K562 (cell line): ENCODE measurements at regions of chr1 and their contacts with region 1.

Region 1: GRCh38 chr1:202998836-202999750 is 8.1 kb upstream of the TMEM183A start:
- DNase-seq: peak; percentile 32 to 86 (median 44)
- ATAC-seq: peak; percentile 77
- H3K4me3 ChIP-seq: no peak overlapping the region
- H3K27ac ChIP-seq: no peak overlapping the region
- H3K4me1 ChIP-seq: peaks cover 6 to 7% of the 10 kb centered on the region in 2 experiments; a peak in 4 of 5 replicates
- H3K27me3 ChIP-seq: no peaks in the 10 kb centered on the region
- CTCF ChIP-seq: peak; percentile 76 to 96 (median 80)
- EP300 ChIP-seq: 0 out of 2 replicates have a peak, but pooled peaks have one; percentile 29
- POLR2A ChIP-seq: no peak
- RAD21 ChIP-seq: peak; percentile 93 to 95

Region 2: DNA sequence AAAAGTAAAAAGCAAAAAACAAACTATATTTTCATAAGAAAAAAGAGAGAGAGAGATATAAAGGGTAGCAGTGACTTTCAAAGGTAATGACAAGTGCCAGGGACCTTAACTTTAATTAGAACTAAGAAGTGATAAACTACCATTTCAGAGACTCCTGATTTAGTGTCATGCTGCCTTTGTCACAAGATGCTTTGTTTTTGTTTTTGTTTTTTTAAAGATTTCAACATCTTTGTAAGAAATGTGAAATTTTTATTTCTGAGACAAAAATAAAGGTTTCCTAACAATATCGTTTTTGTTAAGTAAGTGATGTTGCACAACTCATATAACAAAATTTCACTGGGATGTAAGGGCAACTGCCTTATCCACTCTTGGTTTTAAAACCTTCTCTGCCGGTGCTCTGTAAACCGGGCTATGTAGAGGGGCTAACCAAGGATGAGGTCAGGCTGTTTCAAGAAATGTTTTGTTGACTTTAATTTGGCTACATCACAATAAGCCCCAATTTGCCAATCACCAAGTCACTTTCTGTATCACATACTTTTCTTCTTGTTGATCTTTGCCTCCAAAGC is 253.7 kb before region 1 on chr1:
- CTCF ChIA-PET with region 1: no interaction called
- POLR2A ChIA-PET with region 1: no interaction called
- in situ Hi-C with region 1: loop called (anchors 10 kb)
- intact Hi-C with region 1: loop called (anchors 10 kb)
- DNase-seq: no peak
- ATAC-seq: no peak
- H3K4me3 ChIP-seq: no peak overlapping the region
- H3K27ac ChIP-seq: no peak overlapping the region
- H3K4me1 ChIP-seq: no peaks in the 10 kb centered on the region
- H3K27me3 ChIP-seq: no peaks in the 10 kb centered on the region
- CTCF ChIP-seq: no peak
- EP300 ChIP-seq: no peak
- POLR2A ChIP-seq: no peak
- RAD21 ChIP-seq: no peak

Region 3: DNA sequence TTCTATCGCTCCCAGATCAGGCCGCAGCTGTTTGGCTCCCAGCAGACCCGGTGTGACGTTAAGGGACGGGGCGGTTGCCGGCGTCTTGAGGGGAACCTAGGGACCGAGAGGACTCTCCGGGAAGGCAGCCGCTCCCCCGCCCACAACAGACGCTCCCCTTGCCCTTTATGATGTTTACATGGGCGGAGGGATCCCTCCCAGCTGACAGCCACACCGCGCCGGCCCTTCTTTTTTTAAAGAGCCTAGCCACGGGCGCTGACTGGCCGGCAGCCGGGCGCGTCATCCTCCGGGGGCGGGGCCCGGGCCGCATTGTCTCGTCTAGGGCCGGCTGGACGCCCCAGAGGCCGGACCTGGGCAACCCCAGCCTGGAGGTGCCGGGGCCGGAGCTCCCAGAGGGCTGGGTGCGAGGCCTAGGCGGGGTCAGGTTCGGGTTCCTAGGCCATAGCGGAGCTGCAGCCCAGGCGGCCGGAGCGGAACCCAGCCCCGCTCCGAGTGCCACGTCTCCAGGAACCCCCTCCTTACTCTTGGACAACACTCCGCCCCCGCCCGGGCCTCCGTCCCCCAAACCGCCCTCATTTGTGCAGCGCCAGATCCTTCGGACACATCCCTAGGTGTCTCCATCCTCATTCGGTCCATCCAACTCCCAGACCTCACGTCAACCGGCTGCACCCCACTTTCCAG is 188.3 kb before region 1 on chr1 and contains the start of gene PCAT6:
- CTCF ChIA-PET with region 1: no interaction called
- POLR2A ChIA-PET with region 1: interaction called, 7 read pairs
- in situ Hi-C with region 1: no loop called
- intact Hi-C with region 1: loop called (anchors 5 kb)
- DNase-seq: peak; percentile 96 to 98 (median 97)
- ATAC-seq: peak; percentile 82
- H3K4me3 ChIP-seq: peak within 1 kb of the TSS; percentile 54
- H3K27ac ChIP-seq: peak within 1 kb of the TSS; percentile 54
- H3K4me1 ChIP-seq: peaks cover 27 to 32% of the 10 kb centered on the region in 2 experiments
- H3K27me3 ChIP-seq: no peaks in the 10 kb centered on the region; a peak in 1 of 5 replicates
- CTCF ChIP-seq: no peak
- EP300 ChIP-seq: peak; percentile 61
- POLR2A ChIP-seq: peak; percentile 86
- RAD21 ChIP-seq: 0 out of 4 replicates have a peak, but pooled peaks have one; percentile 8
- polyA plus RNA-seq, gene PCAT6: 0.35 to 0.42 TPM

Region 4: DNA sequence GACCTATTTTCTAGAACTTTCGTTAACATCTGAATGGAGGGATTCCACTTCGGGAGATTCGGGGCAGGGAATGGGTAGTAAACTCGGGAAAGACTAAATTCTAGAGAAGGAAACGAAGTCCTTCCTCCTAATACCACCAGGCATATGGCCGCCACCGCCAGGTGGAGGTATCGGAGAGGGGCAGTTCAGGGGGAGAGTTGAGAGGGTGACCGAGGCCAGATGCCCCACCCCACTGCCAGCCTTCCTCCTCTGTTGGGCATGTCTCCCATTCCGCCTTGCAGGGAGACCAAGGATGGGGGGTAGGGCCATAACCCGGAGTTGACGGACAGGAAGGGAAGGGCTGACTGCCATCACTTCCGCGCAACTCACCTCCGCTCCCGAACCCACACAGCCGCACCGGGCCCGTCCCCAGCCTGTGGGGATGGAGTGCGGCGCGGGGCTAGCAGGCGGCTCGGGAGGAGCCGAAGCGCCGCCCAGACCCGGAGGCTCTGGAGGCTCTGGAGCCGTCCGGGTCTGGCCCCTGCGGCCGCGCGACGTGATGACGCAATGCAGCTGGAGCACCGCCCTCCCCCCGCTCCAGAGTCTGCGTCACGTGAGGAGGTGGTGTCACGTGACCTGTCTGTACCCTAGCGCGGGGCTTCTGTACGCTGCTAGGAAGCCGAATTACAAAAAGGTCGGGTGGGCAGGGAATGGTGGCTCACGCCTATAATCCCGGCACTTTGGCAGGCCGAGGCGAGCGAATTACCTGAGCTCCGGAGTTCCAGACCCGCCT is 72.2 kb before region 1 on chr1 and contains the start of gene KLHL12:
- CTCF ChIA-PET with region 1: interaction called, 23 read pairs
- POLR2A ChIA-PET with region 1: no interaction called
- in situ Hi-C with region 1: loop called (anchors 5 kb)
- intact Hi-C with region 1: loop called (anchors 1 kb)
- DNase-seq: peak; percentile 99
- ATAC-seq: peak; percentile 98
- H3K4me3 ChIP-seq: peak within 1 kb of the TSS; percentile 88
- H3K27ac ChIP-seq: peak within 1 kb of the TSS; percentile 88
- H3K4me1 ChIP-seq: peaks cover 0 to 11% of the 10 kb centered on the region in 2 experiments; a peak in 3 of 5 replicates
- H3K27me3 ChIP-seq: no peaks in the 10 kb centered on the region
- CTCF ChIP-seq: peak; percentile 81 to 87 (median 83)
- EP300 ChIP-seq: peak; percentile 66; the same call in 1 of the 2 replicates
- POLR2A ChIP-seq: peak; percentile 96
- RAD21 ChIP-seq: peak; percentile 74 to 80
- polyA plus RNA-seq, gene KLHL12: 23.1 to 25.7 TPM

Region 5: GRCh38 chr1:202968840-202969295 is 30.2 kb before region 1 on chr1:
- CTCF ChIA-PET with region 1: no interaction called
- POLR2A ChIA-PET with region 1: interaction called, 3 read pairs
- in situ Hi-C with region 1: no loop called
- intact Hi-C with region 1: loop called (anchors 1 kb)
- DNase-seq: peak; percentile 74 to 90 (median 81)
- ATAC-seq: peak; percentile 90
- H3K4me3 ChIP-seq: no peak overlapping the region
- H3K27ac ChIP-seq: no peak overlapping the region; the same call in 2 of the 3 replicates
- H3K4me1 ChIP-seq: peaks cover 20 to 24% of the 10 kb centered on the region in 2 experiments
- H3K27me3 ChIP-seq: no peaks in the 10 kb centered on the region; a peak in 1 of 5 replicates
- CTCF ChIP-seq: peak; percentile 94 to 96 (median 95)
- EP300 ChIP-seq: peak; percentile 41; the same call in 1 of the 2 replicates
- POLR2A ChIP-seq: no peak
- RAD21 ChIP-seq: peak; percentile 69 to 80